A549 (cell line): ENCODE measurements at regions of chr17 and their contacts with region 1.

Region 1: DNA sequence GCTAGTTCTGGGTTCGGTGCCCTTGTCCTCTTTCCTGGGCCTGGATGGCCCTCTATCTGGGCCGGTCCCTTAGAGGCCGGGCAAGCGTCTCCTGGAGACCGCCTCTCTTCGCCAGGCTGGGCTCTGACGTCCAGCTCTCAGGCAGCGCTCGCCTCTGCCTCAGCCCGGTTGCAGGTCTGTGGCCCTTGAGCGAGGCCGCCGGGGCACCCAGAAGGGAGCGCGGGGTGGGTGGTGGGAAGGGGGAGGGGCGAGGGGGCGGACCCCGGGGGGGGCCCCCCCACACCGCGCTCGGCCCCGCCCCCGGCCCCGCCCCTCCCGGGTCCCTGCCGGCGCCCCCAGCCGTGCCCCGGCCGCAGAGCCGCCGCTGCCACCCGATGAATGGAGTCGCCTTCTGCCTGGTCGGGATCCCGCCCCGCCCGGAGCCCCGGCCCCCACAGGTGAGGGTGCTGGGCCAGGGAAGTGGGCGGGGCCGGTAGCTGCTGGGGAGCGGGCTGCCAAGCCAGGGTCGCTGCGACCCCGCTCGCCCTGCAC is at the start of gene ARHGAP23:
- DNase-seq: peak; percentile 57 to 60
- ATAC-seq: peak; percentile 62 to 64
- H3K4me3 ChIP-seq: peak within 1 kb of the TSS; percentile 90
- H3K27ac ChIP-seq: peak within 1 kb of the TSS; percentile 77 to 95
- H3K4me1 ChIP-seq: peaks cover 29% of the 10 kb centered on the region
- CTCF ChIP-seq: no peak
- EP300 ChIP-seq: no peak
- POLR2A ChIP-seq: peak; percentile 40
- RAD21 ChIP-seq: no peak
- polyA plus RNA-seq, gene ARHGAP23: 4.8 and 5.5 TPM in 2 replicates

Region 2: DNA sequence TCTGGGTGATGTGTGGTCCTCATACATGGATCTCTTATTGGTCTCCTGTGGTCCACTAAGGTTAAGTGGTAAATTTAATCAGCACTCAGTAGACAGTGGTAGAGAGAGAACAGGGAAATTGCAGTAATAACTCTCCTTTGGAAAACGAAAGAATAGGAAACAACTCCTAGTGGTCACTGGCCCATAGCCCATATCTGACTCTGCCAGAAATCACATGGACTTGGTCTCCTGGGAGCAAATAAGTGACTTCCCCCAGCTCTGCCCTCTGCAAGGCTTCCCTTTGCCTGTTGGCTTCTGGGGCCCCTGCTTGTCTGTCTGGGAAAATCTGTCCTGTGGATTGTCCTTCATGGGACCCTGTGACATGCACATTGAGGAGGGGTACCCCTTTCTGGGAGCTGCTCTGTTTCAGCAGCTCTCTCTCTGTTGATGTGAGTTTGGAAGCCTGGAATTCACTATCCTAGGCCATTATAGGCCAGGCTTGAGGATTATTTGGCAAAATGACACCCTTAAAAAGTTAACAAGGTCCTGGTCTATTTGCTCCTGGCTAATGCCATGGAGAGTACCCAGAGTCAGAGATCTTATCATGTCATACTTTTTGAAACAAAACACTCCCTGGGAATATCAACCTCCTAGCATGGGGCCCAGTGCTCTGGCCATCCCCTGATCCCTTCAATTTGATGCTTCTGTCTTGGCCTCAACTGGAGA is 625.3 kb before region 1 on chr17:
- CTCF ChIA-PET with region 1: no interaction called
- POLR2A ChIA-PET with region 1: no interaction called
- DNase-seq: no peak
- ATAC-seq: peak in 1 of 2 experiments; percentile 22; a peak in 2 of 6 replicates
- H3K4me3 ChIP-seq: no peak overlapping the region
- H3K27ac ChIP-seq: no peak overlapping the region
- H3K4me1 ChIP-seq: no peaks in the 10 kb centered on the region
- CTCF ChIP-seq: no peak
- EP300 ChIP-seq: no peak
- POLR2A ChIP-seq: no peak
- RAD21 ChIP-seq: no peak

Region 3: GRCh38 chr17:37844158-37844976 is 583.8 kb before region 1 on chr17:
- CTCF ChIA-PET with region 1: no interaction called
- POLR2A ChIA-PET with region 1: no interaction called
- DNase-seq: peak; percentile 71 to 87
- ATAC-seq: peak; percentile 96 to 99
- H3K4me3 ChIP-seq: no peak overlapping the region
- H3K27ac ChIP-seq: peak overlapping the region in 1 of 2 experiments; percentile 24; a peak in 3 of 6 replicates
- H3K4me1 ChIP-seq: peaks cover 16% of the 10 kb centered on the region; the same call in 2 of the 3 replicates
- CTCF ChIP-seq: peak; percentile 82
- EP300 ChIP-seq: no peak
- POLR2A ChIP-seq: no peak
- RAD21 ChIP-seq: peak; percentile 90 to 93

Region 4: DNA sequence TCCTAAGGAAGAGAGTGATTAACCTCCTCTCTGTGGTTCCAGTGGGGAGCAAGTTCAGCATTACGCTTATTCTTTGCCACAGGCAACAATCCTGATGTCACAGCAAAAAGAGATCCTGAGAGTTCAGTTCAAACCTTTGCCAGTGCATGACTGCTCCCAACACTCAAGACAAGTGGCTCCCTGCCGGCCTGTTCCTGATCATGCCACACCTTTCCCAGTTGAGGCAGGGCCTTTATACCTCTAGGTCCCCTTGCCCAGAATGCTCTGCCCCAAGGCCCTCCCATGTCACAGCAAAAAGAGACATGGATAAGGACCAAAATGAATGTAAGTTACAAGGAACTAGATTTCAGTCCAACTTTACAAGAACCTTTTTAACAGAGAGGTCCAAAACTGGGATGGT is 30.9 kb before region 1 on chr17:
- CTCF ChIA-PET with region 1: no interaction called
- POLR2A ChIA-PET with region 1: no interaction called
- DNase-seq: no peak
- ATAC-seq: no peak
- H3K4me3 ChIP-seq: no peak overlapping the region
- H3K27ac ChIP-seq: no peak overlapping the region
- H3K4me1 ChIP-seq: no peaks in the 10 kb centered on the region
- CTCF ChIP-seq: no peak
- EP300 ChIP-seq: no peak
- POLR2A ChIP-seq: no peak
- RAD21 ChIP-seq: no peak

Region 5: GRCh38 chr17:38476544-38476943 is 48.4 kb after region 1 on chr17:
- CTCF ChIA-PET with region 1: interaction called, 117 read pairs
- POLR2A ChIA-PET with region 1: interaction called, 3 read pairs
- DNase-seq: no peak
- ATAC-seq: no peak
- H3K4me3 ChIP-seq: no peak overlapping the region
- H3K27ac ChIP-seq: no peak overlapping the region
- H3K4me1 ChIP-seq: peaks cover 13% of the 10 kb centered on the region
- CTCF ChIP-seq: no peak
- EP300 ChIP-seq: no peak
- POLR2A ChIP-seq: no peak
- RAD21 ChIP-seq: no peak

Region 6: DNA sequence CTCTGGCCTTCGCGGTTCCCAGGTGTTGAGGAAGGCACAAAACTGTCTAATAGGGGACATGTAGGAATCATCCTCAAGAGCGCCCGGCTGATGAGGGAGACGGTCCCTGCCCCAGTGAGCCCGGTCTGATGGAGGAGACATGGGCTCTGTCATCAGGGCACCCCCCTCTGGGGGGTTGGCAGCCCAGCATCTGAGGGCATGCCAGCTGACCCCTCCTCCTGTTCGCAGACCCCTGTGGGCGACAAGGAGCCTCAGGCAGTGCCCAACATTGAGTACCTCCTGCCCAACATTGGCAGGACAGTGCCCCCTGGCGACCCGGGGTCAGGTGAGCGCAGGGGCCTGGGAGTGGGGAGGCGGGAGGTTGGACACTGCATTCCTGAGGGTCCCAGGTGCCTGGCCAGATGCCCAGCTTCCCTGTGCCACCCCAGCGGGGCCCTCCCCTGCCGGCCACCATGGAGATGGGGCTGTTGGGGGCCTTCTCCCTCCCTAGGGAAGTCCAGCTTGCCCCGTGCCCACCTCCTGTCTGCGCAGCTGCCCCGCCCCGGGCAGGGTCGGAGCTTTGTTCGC is 70.1 kb after region 1 on chr17:
- CTCF ChIA-PET with region 1: interaction called, 26 read pairs
- POLR2A ChIA-PET with region 1: no interaction called
- DNase-seq: no peak
- ATAC-seq: no peak
- H3K4me3 ChIP-seq: no peak overlapping the region
- H3K27ac ChIP-seq: no peak overlapping the region
- H3K4me1 ChIP-seq: no peaks in the 10 kb centered on the region
- CTCF ChIP-seq: no peak
- EP300 ChIP-seq: no peak
- POLR2A ChIP-seq: no peak
- RAD21 ChIP-seq: no peak